Activated T-helper 2 cell treated with anti-CD3 and anti-CD28 coated beads, Interferon-gamma antibody, Interleukin-2, Interleukin-4, amounts not matched to agents 10 μg/mL and 5 μg/mL and 100 μg/mL, durations not matched to agents 14 hours and 24 hours and 36 hours (primary cell): ENCODE measurements at regions of chr9 and their contacts with region 1.

Region 1: DNA sequence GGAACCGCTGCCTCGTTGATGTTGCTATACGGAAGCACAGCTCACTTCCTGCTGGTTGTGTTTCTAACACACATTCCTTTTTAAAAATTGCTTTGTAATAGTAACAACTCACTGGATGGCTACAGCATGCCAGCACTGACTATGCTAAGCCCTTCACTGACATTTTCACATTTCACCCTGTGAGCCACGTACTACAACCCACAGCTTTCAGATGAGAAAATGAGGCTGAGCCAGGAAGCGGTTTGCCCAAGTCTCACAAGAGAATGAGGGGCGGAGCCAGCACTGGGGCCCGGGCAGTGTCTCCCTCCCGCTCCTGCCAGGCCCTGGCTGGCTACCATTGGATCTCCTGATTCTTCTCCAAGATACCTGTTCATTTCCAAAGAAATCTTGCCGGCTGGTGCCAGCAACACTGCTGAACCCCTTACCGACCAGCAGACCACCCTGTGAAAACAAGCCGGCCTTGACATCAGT is 38.3 kb downstream of the FAM78A start:
- DNase-seq: peak; percentile 82
- H3K4me3 Mint-ChIP-seq: peak overlapping the region; percentile 34
- H3K27ac Mint-ChIP-seq: peak overlapping the region; percentile 93
- H3K4me1 Mint-ChIP-seq: peaks cover 27% of the 10 kb centered on the region
- H3K27me3 Mint-ChIP-seq: no peaks in the 10 kb centered on the region

Region 2: DNA sequence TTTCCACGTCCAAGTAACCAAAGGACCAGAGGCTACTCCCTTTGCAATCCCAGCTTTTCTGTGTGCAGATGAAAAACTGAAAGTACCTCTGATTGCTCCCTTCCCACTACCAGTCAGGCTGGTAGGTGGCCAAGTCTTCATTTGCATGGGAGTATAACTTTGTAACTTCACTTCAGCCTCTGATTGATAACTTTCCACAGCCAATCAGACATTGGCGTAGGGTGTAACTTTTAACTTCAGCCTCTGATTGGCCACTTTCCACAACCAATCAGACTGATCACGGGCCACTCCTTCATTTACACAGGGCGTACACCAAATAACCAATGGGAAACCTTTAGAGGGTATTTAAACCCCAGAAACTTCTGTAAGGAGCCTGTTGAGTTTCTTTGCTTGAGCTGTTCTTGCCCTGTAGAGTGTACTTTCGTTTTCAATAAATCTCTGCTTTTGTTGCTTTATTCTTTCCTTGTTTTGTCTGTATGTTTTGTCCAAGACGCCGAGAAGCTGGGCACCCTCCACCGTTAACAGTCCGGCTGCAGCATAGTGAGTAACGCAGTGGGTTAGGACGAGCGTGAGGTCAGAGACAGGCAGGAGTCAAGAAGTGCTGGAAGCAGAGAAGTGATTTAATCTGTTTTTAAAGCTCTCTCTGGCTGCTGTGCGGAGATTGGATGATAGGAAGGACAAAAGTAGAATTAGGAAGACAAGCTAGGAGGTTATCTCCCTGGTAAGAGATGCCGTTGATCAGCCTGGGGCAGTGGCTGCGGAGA is 547.8 kb before region 1 on chr9:
- intact Hi-C with region 1: no loop called
- DNase-seq: no peak
- H3K4me3 Mint-ChIP-seq: no peak overlapping the region
- H3K27ac Mint-ChIP-seq: no peak overlapping the region
- H3K4me1 Mint-ChIP-seq: peaks cover 30% of the 10 kb centered on the region
- H3K27me3 Mint-ChIP-seq: peaks cover 7% of the 10 kb centered on the region

Region 3: DNA sequence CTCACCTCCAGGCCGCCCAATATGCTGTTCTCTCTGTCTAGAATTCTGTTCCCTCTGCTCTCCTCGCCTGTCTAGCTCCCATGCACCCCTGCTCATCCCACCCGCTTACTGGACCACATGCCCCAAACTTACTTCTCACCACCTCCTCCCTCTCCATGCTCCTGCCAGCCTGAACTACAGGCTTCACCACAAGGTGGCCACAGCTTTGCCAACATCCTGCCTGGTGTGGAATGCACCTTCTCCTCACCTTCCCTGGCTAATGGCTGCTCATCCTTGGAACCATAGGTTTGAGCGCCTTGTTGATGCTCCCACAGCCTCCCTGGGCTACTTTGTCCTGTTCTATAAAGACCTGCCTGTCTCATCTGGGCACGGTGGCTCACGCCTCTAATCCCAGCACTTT is 219.3 kb before region 1 on chr9:
- intact Hi-C with region 1: no loop called
- DNase-seq: no peak
- H3K4me3 Mint-ChIP-seq: no peak overlapping the region
- H3K27ac Mint-ChIP-seq: no peak overlapping the region
- H3K4me1 Mint-ChIP-seq: no peaks in the 10 kb centered on the region
- H3K27me3 Mint-ChIP-seq: peaks cover 4% of the 10 kb centered on the region

Region 4: DNA sequence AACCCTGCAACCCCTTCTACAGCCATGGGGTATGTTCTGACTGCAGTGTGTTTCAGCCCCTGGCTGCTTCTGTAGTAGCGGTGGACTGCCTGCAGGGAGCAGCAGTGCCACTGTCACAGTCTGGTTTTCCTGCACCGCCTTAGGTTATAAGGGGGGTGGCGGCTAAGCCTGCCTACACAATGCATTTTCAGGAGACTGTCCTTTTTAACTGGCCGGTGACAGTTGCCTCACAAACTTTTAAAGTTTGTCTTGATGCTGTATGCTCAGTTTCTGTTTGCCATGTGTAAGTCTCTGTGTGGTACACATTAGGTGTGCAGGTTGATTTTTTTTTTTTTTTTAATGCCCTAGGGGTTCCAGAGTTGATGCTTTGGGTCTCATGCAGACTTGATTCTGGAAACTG is 59.6 kb before region 1 on chr9:
- intact Hi-C with region 1: loop called (anchors 5 kb)
- DNase-seq: peak; percentile 73
- H3K4me3 Mint-ChIP-seq: no peak overlapping the region
- H3K27ac Mint-ChIP-seq: no peak overlapping the region
- H3K4me1 Mint-ChIP-seq: peaks cover 4% of the 10 kb centered on the region
- H3K27me3 Mint-ChIP-seq: no peaks in the 10 kb centered on the region